ENCODE measurements at regions of chr1 and their contacts with region 1.

Region 1: DNA sequence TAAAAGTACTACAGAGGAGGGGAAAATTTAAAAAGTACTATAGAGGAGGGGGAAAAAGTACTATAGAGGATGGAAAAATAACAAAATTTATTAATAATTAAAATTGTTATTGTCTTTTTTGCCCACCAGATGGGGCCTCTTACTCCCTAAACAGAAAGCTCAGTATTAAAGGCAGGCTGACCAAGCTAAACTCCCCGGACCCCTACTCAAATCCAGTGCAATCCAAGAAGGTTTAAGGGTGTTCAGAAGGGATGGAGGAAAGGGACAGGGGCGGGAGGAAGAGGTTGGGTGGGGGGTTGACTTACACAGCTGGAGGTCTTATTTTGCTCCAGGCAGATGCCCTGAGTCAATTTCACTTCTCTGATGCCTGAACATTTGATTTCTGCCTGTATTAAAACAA is 13.7 kb downstream of the CD34 start:
- DNase-seq: no peak
- ATAC-seq: no peak

Region 2: GRCh38 chr1:207963427-207964194 is 66.4 kb after region 1 on chr1:
- intact Hi-C with region 1: loop called (anchors 5 kb)
- DNase-seq: peak; percentile 97
- ATAC-seq: peak; percentile 81

Region 3: DNA sequence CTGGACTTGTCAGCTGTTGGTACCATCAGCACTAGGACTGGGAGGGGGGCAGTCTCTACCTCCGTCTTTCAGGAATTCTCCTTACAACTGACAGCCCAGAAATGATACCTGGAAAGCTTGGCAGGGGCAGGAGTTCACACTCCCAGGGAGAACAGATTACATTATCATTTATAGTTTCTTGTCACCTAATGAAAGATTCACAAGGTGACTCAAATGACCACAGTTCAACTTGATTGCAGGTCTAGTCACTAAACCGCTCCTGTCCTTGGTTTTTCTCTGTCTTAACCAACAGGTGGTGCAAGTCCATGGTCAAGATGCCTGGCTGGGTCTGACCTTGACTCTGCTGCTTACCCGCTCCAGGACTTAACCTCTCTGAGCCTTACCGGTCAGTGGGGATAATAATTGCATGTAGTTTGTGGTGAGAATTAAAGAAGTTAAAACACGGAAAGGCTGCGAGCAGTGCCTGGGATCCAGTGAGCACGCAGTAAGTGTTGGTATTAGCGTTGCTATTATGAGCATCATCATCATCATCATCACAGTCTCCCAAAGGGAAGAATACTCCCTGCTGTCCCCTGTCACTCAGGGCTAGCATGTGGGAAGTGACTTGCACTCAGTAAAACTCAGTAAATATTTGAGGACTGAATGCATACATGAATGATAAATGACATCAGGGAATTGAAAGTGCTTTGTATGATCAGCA is 139.1 kb after region 1 on chr1:
- intact Hi-C with region 1: no loop called
- DNase-seq: no peak
- ATAC-seq: peak; percentile 62